Common myeloid progenitor, CD34-positive (primary cell): ENCODE measurements at regions of chr2 and their contacts with region 1.

Region 1: DNA sequence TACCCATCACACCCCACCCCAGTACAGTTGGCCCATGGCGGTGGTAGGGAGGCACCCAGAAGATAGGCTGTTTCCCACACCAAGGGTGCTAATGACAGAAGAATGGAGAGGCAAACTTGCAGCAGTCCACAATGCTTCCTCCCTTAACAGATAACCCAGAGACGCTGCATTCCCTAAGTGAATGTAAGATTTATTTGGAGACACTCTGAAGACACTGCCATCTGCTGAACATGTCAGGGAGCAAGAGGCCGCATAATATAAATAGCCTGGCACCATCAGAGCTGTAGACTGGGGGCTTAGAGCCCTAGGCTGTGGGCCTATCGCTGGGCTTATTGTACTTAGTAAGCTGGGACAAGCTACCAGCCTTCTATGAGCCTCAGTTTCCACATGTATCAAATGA is 2.2 kb upstream of the IWS1 start:
- DNase-seq: peak in 1 of 3 donors; percentile 25
- H3K4me3 ChIP-seq: no peak overlapping the region
- H3K27ac ChIP-seq: no peak overlapping the region
- H3K4me1 ChIP-seq: peaks cover 11 to 21% (median 19%) of the 10 kb centered on the region in 4 experiments
- H3K27me3 ChIP-seq: peaks cover 0 to under 1% (median 0%) of the 10 kb centered on the region in 5 experiments

Region 2: GRCh38 chr2:127278959-127279358 is 249.5 kb before region 1 on chr2:
- CTCF ChIA-PET with region 1: no interaction called
- POLR2A ChIA-PET with region 1: interaction called, 13 read pairs
- DNase-seq: no peak
- H3K4me3 ChIP-seq: no peak overlapping the region
- H3K27ac ChIP-seq: no peak overlapping the region
- H3K4me1 ChIP-seq: no peaks in the 10 kb centered on the region
- H3K27me3 ChIP-seq: no peaks in the 10 kb centered on the region

Region 3: DNA sequence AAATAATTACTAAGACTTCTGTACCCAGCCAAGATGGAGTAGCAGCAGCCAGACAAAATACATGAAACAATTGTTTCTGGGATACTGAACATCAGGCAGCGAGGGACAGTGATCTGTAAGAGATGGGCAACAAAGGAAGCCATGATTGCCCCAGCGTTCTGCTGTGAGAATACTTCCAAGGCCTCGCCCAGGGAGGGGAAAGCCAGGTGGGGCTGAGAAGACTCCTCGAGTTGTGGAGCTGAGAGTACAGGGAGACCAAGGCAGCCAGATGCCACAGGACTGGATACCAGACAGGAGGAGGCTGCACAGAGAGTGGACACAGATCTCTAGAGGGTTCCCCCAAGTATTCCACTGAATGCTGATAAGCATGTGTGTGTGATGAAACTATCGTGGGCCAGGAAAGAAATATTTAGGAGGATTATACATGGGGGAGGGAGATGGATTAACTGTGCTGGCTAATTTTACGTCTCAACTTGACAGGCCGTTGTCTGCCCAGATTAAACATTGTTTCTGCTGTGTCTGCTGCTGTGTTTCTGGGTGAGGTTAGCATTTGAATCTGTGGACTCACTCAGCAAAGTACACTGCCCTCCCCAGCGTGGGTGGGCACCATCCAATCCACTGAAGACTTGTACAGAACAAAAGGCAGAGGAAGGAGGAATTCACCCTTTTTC is 157.1 kb after region 1 on chr2:
- CTCF ChIA-PET with region 1: no interaction called
- POLR2A ChIA-PET with region 1: no interaction called
- DNase-seq: no peak
- H3K4me3 ChIP-seq: no peak overlapping the region
- H3K27ac ChIP-seq: no peak overlapping the region
- H3K4me1 ChIP-seq: peaks cover 0 to 4% (median 1%) of the 10 kb centered on the region in 4 experiments
- H3K27me3 ChIP-seq: no peaks in the 10 kb centered on the region

Region 4: GRCh38 chr2:128187032-128187654 is 658.7 kb after region 1 on chr2:
- CTCF ChIA-PET with region 1: no interaction called
- POLR2A ChIA-PET with region 1: no interaction called
- DNase-seq: no peak
- H3K4me3 ChIP-seq: no peak overlapping the region
- H3K27ac ChIP-seq: no peak overlapping the region
- H3K4me1 ChIP-seq: peaks cover 0 to 4% (median 3%) of the 10 kb centered on the region in 4 experiments
- H3K27me3 ChIP-seq: no peaks in the 10 kb centered on the region